PC-3 (cell line): ENCODE measurements at regions of chr4 and their contacts with region 1.

Region 1: GRCh38 chr4:169612871-169613859 is 782 bp upstream of the NEK1 start:
- DNase-seq: peak; percentile 82
- ATAC-seq: peak; percentile 68
- H3K4me3 ChIP-seq: peak overlapping the region; percentile 100
- H3K27ac ChIP-seq: peak overlapping the region; percentile 33; the same call in 1 of the 2 replicates
- H3K4me1 ChIP-seq: peaks cover 12% of the 10 kb centered on the region
- H3K27me3 ChIP-seq: no peaks in the 10 kb centered on the region
- CTCF ChIP-seq: peak; percentile 75

Region 2: GRCh38 chr4:169649545-169650226 is 36.5 kb after region 1 on chr4:
- CTCF ChIA-PET with region 1: no interaction called
- POLR2A ChIA-PET with region 1: no interaction called
- intact Hi-C with region 1: no loop called
- DNase-seq: no peak
- ATAC-seq: no peak
- H3K4me3 ChIP-seq: no peak overlapping the region
- H3K27ac ChIP-seq: no peak overlapping the region
- H3K4me1 ChIP-seq: no peaks in the 10 kb centered on the region
- H3K27me3 ChIP-seq: no peaks in the 10 kb centered on the region
- CTCF ChIP-seq: no peak

Region 3: GRCh38 chr4:169723207-169723965 is 110.2 kb after region 1 on chr4:
- CTCF ChIA-PET with region 1: no interaction called
- POLR2A ChIA-PET with region 1: no interaction called
- intact Hi-C with region 1: loop called (anchors 1 kb)
- DNase-seq: peak; percentile 31
- ATAC-seq: 0 out of 2 replicates have a peak, but pooled peaks have one; percentile 37
- H3K4me3 ChIP-seq: no peak overlapping the region
- H3K27ac ChIP-seq: no peak overlapping the region
- H3K4me1 ChIP-seq: no peaks in the 10 kb centered on the region
- H3K27me3 ChIP-seq: no peaks in the 10 kb centered on the region
- CTCF ChIP-seq: peak; percentile 56

Region 4: DNA sequence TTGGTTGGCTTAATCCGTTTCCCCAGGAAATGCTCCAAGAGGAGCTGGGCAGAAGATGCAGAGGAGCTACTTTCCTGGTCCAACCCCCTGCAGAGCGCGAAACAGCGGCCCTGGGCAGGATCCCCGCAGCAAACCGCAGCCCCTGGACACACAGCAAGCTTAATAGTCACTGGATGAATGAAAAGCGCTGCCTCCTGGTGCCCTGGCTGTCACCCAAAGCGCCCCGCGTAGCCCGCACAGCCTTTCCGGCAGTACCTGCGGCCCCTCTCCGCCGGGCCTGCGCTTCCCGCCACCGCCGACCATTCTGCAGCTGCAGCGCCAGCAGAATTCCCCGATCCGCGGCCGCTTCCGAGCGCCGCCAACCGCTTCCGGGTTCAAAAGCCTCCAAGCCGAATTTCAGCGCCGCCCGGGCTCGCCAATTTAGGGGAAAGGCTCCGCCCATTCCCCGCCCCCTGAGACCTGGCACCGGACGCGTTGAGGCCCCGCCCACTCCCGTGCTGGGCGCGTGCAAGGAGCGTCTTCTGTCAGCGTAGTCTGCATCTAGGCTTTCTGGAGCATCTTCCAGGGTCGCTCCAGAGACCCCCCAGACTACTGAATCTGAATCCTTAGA is 144.5 kb after region 1 on chr4 and contains the start of gene HPF1:
- CTCF ChIA-PET with region 1: no interaction called
- POLR2A ChIA-PET with region 1: no interaction called
- intact Hi-C with region 1: loop called (anchors 1 kb)
- DNase-seq: peak; percentile 87
- ATAC-seq: peak; percentile 93
- H3K4me3 ChIP-seq: peak within 1 kb of the TSS; percentile 97
- H3K27ac ChIP-seq: peak within 1 kb of the TSS; percentile 4; the same call in 1 of the 2 replicates
- H3K4me1 ChIP-seq: peaks cover 9% of the 10 kb centered on the region; the same call in 1 of the 2 replicates
- H3K27me3 ChIP-seq: no peaks in the 10 kb centered on the region
- CTCF ChIP-seq: no peak
- total RNA-seq, gene HPF1: 10.6 and 13.9 TPM in 2 replicates

Region 5: DNA sequence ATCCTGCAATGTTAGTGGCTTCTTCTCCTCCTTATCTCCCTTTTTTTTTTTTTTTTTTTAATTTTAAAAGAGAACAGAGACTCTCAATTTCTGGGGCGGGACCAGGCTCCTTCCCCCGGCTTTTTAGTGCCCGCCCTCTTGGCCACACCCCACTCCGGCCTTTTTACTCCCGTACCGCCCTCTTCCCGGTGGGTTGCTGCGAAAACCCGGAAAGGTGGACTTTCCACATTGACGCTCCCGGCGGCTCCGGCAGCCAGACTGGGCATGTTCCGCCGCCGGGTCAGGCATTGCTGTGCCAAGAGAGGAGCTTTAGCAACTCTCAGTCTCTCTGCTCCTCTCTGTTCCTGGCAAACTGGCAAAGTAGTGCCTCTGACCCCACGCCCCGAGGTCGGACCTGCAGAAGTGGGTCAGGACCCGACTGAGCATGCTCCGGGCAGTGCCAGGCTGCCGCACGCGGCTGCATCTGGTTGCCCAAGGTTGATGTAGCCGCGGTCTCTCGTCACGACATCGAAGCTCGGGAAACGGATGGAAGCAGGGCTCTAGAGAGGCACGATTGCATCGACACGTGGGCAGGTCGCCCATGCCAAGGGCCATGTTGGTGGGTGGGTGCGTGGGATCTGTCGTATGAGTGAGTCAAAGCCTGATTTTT is 414.1 kb after region 1 on chr4:
- CTCF ChIA-PET with region 1: no interaction called
- POLR2A ChIA-PET with region 1: no interaction called
- intact Hi-C with region 1: loop called (anchors 5 kb)
- DNase-seq: peak; percentile 87
- ATAC-seq: peak; percentile 64
- H3K4me3 ChIP-seq: peak overlapping the region; percentile 79
- H3K27ac ChIP-seq: no peak overlapping the region
- H3K4me1 ChIP-seq: 0 out of 2 replicates have a peak, but pooled peaks cover 4% of the 10 kb centered on the region
- H3K27me3 ChIP-seq: peaks cover 19% of the 10 kb centered on the region
- CTCF ChIP-seq: no peak

Region 6: GRCh38 chr4:170047771-170048354 is 434.7 kb after region 1 on chr4:
- CTCF ChIA-PET with region 1: no interaction called
- POLR2A ChIA-PET with region 1: no interaction called
- intact Hi-C with region 1: loop called (anchors 1 kb)
- DNase-seq: peak; percentile 65
- ATAC-seq: no peak
- H3K4me3 ChIP-seq: no peak overlapping the region
- H3K27ac ChIP-seq: no peak overlapping the region
- H3K4me1 ChIP-seq: no peaks in the 10 kb centered on the region
- H3K27me3 ChIP-seq: no peaks in the 10 kb centered on the region
- CTCF ChIP-seq: peak; percentile 71